ENCODE measurements at regions of chr12 and their contacts with region 1.

Region 1: DNA sequence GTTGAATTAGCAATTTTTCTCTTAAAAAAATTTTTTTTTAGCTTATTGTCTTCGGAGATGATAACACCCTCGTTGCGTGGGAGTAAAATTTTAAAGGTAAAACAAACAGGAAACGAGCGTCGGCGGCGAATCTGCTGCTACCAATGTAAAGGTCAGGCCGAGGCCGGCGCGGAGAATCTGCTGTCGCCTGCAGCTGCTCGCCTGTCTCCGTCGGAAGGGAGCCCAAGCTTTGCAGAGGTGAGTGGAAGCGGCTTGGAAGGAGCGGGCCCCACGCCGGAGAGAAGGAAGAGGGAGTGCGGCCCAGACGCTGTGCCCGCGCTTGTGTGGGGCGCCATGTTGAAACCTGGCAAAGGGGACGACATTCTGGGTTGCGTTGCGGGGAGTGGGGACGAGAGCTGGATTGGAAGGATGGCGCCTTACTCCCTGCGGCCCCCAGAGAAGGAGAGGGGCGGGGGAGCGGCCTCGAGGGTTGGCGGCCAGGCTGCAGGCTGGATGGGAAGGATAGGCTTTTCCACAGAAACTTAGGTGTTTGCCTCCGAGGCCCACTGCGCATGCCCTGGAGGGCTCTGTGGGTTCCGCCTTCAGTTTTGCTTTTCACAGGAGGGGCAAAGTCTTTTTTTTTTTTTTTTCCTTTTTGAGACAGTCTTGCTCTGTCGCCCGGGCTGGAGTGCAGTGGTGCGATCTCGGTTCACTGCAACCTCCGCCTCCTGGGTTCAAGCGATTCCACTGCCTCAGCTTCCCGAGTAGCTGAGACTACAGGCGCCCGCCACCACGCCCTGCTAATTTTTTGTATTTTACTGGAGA is at the start of gene SNRNP35:
- DNase-seq: peak; percentile 95
- H3K4me3 ChIP-seq: peak within 1 kb of the TSS; percentile 54
- H3K27ac ChIP-seq: peak within 1 kb of the TSS; percentile 94
- H3K4me1 ChIP-seq: peaks cover 5% of the 10 kb centered on the region
- H3K27me3 ChIP-seq: no peaks in the 10 kb centered on the region
- CTCF ChIP-seq: 0 out of 2 replicates have a peak, but pooled peaks have one; percentile 16
- total RNA-seq, gene SNRNP35: 19.1 and 20.6 TPM in 2 replicates

Region 2: DNA sequence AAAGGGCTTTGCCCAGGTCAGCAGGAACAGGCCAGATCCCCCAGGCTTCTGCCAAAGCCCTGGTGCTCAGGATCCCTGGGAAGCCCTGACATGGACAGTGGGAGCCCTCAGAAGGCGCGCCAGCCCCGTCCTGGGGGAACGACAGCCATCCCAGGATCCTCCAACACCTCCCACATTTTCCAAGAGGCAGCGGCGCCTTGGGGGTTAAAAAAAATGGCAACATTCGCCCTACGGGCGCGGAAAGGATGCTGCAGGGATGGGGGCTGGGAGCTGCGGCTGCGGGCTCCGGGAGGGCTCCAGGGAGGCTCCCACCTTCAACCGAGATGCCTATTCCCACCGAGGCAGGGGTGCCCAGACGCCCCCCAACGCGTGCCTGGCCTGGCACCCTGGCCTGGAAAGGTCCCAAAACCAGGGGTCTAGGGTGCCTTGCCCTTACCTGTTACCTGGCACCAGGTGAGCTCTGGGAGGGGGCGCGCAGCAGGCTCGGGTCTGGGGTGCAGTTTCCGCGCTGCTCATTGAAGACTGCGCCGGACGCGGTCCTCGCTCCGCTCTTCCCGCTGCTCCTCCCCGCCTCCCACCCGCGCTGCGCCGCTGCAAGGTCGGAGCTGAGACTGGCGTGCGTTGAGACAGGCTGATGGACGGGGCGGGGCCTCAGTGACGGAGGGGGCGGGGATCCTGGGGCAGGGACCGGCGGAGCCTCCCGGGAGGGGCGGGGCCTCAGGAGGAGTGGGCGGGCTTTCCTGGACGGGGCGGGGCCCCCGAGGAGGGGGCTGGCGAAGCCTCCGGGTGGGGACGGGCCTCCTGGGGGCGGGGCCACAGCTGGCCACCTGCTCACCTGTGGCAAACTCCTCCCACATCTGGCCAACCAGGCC is 492.1 kb before region 1 on chr12 and contains the start of gene ABCB9:
- CTCF ChIA-PET with region 1: no interaction called
- POLR2A ChIA-PET with region 1: interaction called, 18 read pairs
- intact Hi-C with region 1: no loop called
- DNase-seq: peak; percentile 97
- H3K4me3 ChIP-seq: peak within 1 kb of the TSS; percentile 58
- H3K27ac ChIP-seq: peak within 1 kb of the TSS; percentile 51
- H3K4me1 ChIP-seq: peaks cover 12% of the 10 kb centered on the region
- H3K27me3 ChIP-seq: no peaks in the 10 kb centered on the region
- CTCF ChIP-seq: no peak
- total RNA-seq, gene ABCB9: 8.9 and 10.6 TPM in 2 replicates

Region 3: GRCh38 chr12:123278101-123278627 is 180.0 kb before region 1 on chr12:
- CTCF ChIA-PET with region 1: no interaction called
- POLR2A ChIA-PET with region 1: no interaction called
- intact Hi-C with region 1: no loop called
- DNase-seq: peak; percentile 20
- H3K4me3 ChIP-seq: no peak overlapping the region
- H3K27ac ChIP-seq: no peak overlapping the region
- H3K4me1 ChIP-seq: no peaks in the 10 kb centered on the region
- H3K27me3 ChIP-seq: no peaks in the 10 kb centered on the region
- CTCF ChIP-seq: no peak

Region 4: DNA sequence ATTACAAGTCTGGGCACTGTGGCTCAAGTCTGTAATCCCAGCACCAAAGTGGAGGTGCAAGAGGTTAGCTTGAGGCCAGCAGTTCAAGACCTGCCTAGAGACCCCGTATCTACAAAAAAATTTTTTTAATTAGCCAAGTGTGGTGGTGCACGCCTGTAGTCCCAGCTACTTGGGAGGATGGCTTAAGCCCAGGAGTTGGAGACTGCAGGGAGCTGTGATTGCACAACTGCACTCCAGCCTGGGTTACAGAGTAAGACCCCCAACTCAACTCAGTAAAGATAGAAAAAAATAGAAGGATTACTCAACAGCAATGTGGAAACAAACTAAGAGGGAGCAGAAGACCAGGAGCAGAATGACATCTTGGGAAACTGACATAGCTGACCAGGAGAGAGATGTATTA is 106.8 kb before region 1 on chr12:
- CTCF ChIA-PET with region 1: no interaction called
- POLR2A ChIA-PET with region 1: interaction called, 14 read pairs
- intact Hi-C with region 1: no loop called
- DNase-seq: no peak
- H3K4me3 ChIP-seq: no peak overlapping the region
- H3K27ac ChIP-seq: no peak overlapping the region
- H3K4me1 ChIP-seq: no peaks in the 10 kb centered on the region
- H3K27me3 ChIP-seq: no peaks in the 10 kb centered on the region
- CTCF ChIP-seq: no peak

Region 5: GRCh38 chr12:124044809-124045321 is 586.7 kb after region 1 on chr12:
- CTCF ChIA-PET with region 1: no interaction called
- POLR2A ChIA-PET with region 1: no interaction called
- intact Hi-C with region 1: no loop called
- DNase-seq: no peak
- H3K4me3 ChIP-seq: no peak overlapping the region
- H3K27ac ChIP-seq: no peak overlapping the region
- H3K4me1 ChIP-seq: peaks cover 9% of the 10 kb centered on the region
- H3K27me3 ChIP-seq: no peaks in the 10 kb centered on the region
- CTCF ChIP-seq: no peak

Region 6: DNA sequence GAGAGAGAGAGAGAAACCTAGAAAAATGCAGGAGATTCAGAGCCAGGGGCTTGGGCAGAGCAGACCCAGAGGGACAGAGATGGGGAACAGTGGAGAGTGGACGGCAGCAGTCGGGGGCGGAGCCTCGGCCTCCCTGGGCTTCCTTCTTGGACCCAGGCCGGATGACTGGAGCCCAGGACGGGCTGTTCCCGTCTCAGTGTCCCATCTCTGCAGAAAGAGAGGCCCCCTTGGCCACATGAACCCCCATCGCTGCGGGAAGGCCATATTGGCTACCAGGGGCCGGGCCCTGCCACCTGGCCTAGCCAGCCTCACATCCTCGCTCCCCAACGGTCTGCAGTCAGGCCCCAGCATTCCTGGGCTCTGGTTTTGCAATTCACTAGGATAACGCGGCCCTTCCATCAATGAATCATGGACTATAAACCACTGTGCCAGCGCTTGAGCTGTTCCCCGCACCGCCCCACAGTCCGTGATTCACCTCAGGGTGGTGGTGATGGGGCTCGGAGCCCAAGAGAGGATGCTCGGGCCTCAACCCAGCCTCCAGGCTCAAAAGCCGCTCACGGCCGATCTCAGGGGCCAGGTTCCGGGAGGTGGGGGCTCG is 953.2 kb after region 1 on chr12:
- CTCF ChIA-PET with region 1: no interaction called
- POLR2A ChIA-PET with region 1: no interaction called
- intact Hi-C with region 1: no loop called
- DNase-seq: no peak
- H3K4me3 ChIP-seq: no peak overlapping the region
- H3K27ac ChIP-seq: no peak overlapping the region
- H3K4me1 ChIP-seq: peaks cover 8% of the 10 kb centered on the region
- H3K27me3 ChIP-seq: no peaks in the 10 kb centered on the region
- CTCF ChIP-seq: no peak